ENCODE measurements at regions of chr6 and their contacts with region 1.

Region 1: DNA sequence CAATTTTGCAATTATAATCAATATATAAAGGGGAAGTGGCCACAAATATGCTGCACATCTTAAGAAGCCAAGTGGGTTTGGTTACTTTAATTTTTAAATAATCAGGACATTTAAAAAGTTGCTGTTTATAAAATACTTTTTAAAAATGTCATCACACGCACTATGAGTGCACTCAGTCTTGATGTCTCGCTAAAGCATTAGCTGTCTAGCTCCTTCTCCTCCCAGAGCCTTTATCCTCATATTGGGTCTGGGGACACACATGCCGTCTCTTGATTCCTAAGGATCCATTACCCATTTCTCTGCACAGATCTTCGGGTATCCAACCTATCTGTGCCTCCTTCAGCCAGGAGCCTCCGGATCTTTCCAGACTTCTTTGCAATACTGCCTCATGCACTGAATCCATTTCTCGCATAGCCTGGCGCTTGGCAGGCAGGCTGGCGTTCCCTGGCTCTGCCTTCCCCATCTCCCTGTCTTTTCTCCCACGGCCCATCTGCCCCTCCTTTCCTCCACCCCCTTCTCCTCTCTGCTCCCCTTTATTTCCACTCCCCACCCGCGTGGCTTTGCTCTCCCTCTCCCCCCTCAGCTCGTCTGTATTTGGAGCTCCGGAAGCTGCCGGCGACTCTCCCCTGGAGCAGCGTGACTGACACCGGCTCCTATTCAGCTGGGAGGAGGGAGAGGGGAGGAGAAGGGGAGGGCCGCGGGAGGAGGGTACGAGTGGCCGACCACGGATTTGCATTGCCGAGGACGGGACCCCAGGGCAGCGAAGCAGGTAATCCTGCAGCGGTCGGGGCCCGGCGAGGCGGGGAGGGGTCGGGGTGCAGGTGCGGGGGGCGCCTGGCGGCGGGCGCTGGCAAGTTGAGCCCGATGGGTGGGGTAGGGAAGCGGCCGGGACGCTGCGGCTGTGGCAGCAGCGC is at the start of gene CAP2:
- DNase-seq: peak; percentile 77 to 86
- ATAC-seq: peak; percentile 81
- H3K4me3 ChIP-seq: peak within 1 kb of the TSS; percentile 96 to 97
- H3K27ac ChIP-seq: peak within 1 kb of the TSS in 1 of 2 donors; percentile 61
- H3K4me1 ChIP-seq: peaks cover 0 to 2% of the 10 kb centered on the region in 2 donors
- H3K27me3 ChIP-seq: no peaks in the 10 kb centered on the region
- total RNA-seq, gene CAP2: 21.2 to 28.4 TPM

Region 2: DNA sequence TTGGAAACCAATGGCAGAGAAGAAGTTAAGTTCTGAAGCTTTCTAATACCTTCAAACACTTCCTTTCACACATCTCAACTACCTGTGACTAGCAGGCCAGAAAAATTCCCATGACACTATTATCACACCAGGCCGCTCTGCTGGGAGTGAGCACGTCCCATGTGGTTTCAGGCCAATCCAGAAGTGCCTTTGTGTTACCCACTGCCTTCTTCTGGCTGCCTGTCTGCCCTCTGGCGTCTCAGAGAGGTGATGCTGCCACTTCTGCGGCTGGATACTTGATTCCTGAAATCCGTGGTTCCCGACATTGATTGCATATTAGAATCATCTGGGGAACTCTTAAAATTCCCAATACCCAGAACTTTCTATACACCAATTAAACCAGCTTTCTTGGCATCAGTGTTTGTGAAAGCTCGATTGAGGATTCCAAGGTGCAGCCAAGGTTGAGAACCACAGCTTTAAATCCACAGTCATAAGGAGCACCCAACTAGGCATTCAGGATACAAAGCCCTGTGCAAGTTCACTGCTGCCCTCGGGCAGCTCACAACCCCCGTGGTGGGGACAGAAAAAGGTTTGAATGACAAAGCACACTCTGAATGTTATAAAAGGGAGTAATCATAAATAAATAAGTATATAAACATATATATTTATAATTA is 225.8 kb before region 1 on chr6:
- intact Hi-C with region 1: no loop called
- DNase-seq: no peak
- ATAC-seq: no peak
- H3K4me3 ChIP-seq: no peak overlapping the region
- H3K27ac ChIP-seq: no peak overlapping the region
- H3K4me1 ChIP-seq: no peaks in the 10 kb centered on the region
- H3K27me3 ChIP-seq: no peaks in the 10 kb centered on the region

Region 3: GRCh38 chr6:17281100-17281494 is 112.1 kb before region 1 on chr6 and contains the start of gene RBM24:
- intact Hi-C with region 1: loop called (anchors 5 to 10 kb)
- DNase-seq: peak; percentile 76 to 93
- ATAC-seq: peak; percentile 70
- H3K4me3 ChIP-seq: peak within 1 kb of the TSS; percentile 48 to 84
- H3K27ac ChIP-seq: no peak within 1 kb of the TSS
- H3K4me1 ChIP-seq: no peaks in the 10 kb centered on the region
- H3K27me3 ChIP-seq: no peaks in the 10 kb centered on the region
- total RNA-seq, gene RBM24: 2.5 to 6.1 TPM

Region 4: GRCh38 chr6:17289630-17290061 is 103.6 kb before region 1 on chr6:
- intact Hi-C with region 1: loop called (anchors 5 to 10 kb)
- DNase-seq: peak in 1 of 2 donors; percentile 50
- ATAC-seq: peak; percentile 69
- H3K4me3 ChIP-seq: peak overlapping the region in 1 of 2 donors; percentile 87
- H3K27ac ChIP-seq: peak overlapping the region; percentile 8 to 86
- H3K4me1 ChIP-seq: peaks cover 3 to 5% of the 10 kb centered on the region in 2 donors
- H3K27me3 ChIP-seq: no peaks in the 10 kb centered on the region

Region 5: DNA sequence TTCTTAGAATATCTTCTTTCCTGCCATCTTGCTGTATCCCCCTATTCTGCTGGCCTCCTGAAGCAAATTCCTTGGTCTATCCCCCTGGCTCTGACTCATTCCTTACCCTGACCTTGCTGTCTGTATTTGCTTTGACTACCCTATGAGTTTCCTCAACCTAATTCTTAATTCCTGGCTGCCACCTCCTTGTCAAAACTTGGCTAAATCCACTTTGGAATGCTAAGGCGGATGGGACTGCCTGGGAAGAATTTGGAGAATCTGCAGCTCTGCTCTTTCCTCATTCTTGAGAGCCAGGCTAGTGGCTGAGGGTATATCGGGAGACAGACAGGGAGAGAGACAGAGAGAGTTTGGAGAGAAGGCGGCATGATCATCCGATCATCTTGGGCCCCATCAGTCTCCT is 24.6 kb after region 1 on chr6:
- intact Hi-C with region 1: loop called in 1 of 2 experiments (anchors 2 kb)
- DNase-seq: no peak
- ATAC-seq: peak; percentile 51
- H3K4me3 ChIP-seq: peak overlapping the region; percentile 1 to 69
- H3K27ac ChIP-seq: peak overlapping the region in 1 of 2 donors; percentile 97
- H3K4me1 ChIP-seq: peaks cover 6 to 8% of the 10 kb centered on the region in 2 donors
- H3K27me3 ChIP-seq: no peaks in the 10 kb centered on the region

Region 6: DNA sequence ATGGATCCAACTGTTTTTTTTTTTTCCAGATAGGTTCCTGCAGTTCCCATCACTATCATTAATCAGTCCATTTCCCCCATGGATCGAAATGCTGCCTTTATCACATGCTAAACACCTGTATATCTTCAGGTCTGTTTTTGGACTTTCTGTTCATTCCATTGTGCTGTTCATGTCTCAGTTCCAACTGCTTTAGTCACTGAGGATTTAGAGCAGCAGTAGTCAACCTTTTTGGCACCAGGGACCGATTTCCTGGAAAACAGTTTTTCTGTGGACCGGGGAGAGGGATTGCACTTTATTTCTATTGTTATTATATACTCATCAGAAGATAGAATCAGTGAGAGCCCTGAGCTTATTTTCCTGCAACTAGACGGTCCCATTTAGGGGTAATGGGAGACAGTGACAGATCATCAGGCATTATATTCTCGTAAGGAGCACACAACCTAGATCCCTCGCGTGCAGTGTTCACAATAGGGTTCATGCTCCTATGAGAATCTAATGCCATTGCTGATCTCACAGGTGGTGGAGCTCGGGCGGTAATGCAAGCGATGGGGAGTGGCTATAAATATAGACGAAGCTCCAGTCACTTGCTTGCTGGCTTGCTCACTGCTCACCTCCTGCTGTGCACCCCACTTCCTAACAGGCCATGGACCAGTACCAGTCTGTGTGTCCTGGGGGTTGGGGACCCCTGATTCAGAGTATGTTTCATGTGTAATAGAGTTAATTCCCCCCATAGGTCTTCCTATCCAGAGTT is 46.2 kb after region 1 on chr6:
- intact Hi-C with region 1: loop called in 1 of 2 experiments (anchors 5 kb)
- DNase-seq: no peak
- ATAC-seq: no peak
- H3K4me3 ChIP-seq: no peak overlapping the region
- H3K27ac ChIP-seq: no peak overlapping the region
- H3K4me1 ChIP-seq: peaks cover 0 to 1% of the 10 kb centered on the region in 2 donors
- H3K27me3 ChIP-seq: no peaks in the 10 kb centered on the region

Region 7: DNA sequence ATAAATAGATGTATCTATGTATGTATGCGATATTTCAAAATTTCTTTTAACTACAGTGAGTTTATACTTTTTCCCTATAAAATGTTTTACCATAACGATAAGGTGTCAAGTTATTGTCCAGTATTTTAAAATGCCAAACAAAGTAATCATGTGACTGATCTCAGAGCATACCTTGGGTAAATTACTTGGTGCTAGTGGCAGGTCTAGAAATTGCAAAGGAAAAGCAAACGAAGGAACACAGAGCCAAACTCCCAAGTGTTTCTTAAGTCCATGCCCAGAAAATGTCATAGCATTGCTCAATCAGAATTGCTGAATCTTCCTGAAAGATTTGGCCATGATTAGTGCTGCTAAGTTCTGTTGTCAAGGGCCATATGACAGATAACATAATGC is 77.7 kb after region 1 on chr6:
- intact Hi-C with region 1: loop called in 1 of 2 experiments (anchors 10 kb)
- DNase-seq: no peak
- ATAC-seq: peak; percentile 75
- H3K4me3 ChIP-seq: no peak overlapping the region
- H3K27ac ChIP-seq: peak overlapping the region in 1 of 2 donors; percentile 43
- H3K4me1 ChIP-seq: peaks cover 0 to 8% of the 10 kb centered on the region in 2 donors
- H3K27me3 ChIP-seq: no peaks in the 10 kb centered on the region

Region 8: DNA sequence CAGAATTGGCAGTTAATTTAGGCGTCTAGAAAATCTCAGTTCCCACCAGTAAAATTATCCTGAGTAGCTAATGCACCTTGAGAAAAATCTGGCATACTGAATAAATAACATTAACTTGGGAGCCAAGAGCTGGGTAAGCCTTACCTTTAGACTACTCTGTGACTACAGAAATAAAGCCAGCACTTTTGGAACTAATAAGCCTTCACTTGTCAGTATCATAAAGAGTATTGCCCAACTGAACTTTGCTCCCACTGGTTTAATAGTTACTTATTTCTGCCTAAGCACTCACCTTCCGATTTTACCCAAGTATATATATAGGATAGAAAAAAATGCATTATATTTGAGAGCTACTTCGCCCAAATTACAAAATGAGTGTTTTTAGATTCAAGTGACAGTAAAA is 217.6 kb after region 1 on chr6:
- intact Hi-C with region 1: no loop called
- DNase-seq: no peak
- ATAC-seq: no peak
- H3K4me3 ChIP-seq: no peak overlapping the region
- H3K27ac ChIP-seq: no peak overlapping the region
- H3K4me1 ChIP-seq: no peaks in the 10 kb centered on the region
- H3K27me3 ChIP-seq: no peaks in the 10 kb centered on the region